CD14-positive monocyte (primary cell): ENCODE measurements at regions of chr10 and their contacts with region 1.

Region 1: DNA sequence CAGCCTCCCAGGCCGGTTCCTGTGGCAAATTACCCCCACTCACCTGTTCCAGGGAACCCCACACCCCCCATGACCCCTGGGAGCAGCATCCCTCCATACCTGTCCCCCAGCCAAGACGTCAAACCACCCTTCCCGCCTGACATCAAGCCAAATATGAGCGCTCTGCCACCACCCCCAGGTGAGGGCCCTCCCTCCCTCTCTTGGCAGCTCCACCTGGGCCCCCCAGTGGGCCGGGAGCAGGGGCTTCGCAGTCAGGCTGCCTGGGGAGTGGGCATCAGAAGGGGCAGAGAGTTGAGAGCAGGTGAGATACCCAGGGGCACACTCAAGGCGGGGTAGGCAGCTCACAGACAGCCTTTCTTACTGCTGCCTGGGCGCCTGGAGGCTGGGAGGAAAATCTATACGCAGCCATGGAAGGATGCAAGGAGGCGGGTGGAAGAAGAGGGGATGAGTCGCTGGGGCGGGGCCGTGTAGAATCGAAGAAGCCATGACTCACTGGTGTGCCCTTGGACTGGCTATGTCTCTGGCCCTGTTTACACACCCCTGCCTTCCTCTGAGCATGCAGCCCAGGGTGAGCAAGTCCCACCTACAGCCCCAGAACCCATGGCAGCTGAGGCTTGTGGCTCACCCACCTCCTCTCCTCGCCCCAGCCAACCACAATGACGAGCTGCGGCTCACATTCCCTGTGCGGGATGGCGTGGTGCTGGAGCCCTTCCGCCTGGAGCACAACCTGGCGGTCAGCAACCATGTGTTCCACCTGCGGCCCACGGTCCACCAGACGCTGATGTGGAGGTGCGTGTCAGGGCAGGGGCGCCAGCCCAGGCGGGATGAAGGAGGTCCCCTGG is 48.6 kb upstream of the PPIF start:
- DNase-seq: peak; percentile 90 to 96 (median 94)
- H3K4me3 ChIP-seq: no peak overlapping the region
- H3K4me3 Mint-ChIP-seq: no peak overlapping the region
- H3K27ac ChIP-seq: peak overlapping the region; percentile 49 to 98
- H3K27ac Mint-ChIP-seq: peak overlapping the region; percentile 42 to 100 (median 90)
- H3K4me1 ChIP-seq: peaks cover 46 to 51% of the 10 kb centered on the region in 2 donors
- H3K4me1 Mint-ChIP-seq: peaks cover 48% of the 10 kb centered on the region
- H3K27me3 ChIP-seq: no peaks in the 10 kb centered on the region
- H3K27me3 Mint-ChIP-seq: peaks cover 0 to 2% (median 0%) of the 10 kb centered on the region in 3 donors
- CTCF ChIP-seq: no peak

Region 2: GRCh38 chr10:77456414-77456813 is 1842.2 kb before region 1 on chr10:
- intact Hi-C with region 1: no loop called
- DNase-seq: no peak
- H3K4me3 ChIP-seq: no peak overlapping the region
- H3K4me3 Mint-ChIP-seq: no peak overlapping the region
- H3K27ac ChIP-seq: no peak overlapping the region
- H3K27ac Mint-ChIP-seq: no peak overlapping the region
- H3K4me1 ChIP-seq: no peaks in the 10 kb centered on the region
- H3K4me1 Mint-ChIP-seq: no peaks in the 10 kb centered on the region
- H3K27me3 ChIP-seq: no peaks in the 10 kb centered on the region
- H3K27me3 Mint-ChIP-seq: peaks cover 2 to 11% (median 5%) of the 10 kb centered on the region in 3 donors
- CTCF ChIP-seq: no peak

Region 3: GRCh38 chr10:79316671-79317431 is 18.2 kb after region 1 on chr10:
- intact Hi-C with region 1: loop called (anchors 1 to 2 kb)
- DNase-seq: peak in 2 of 3 donors; percentile 44 to 54
- H3K4me3 ChIP-seq: no peak overlapping the region
- H3K4me3 Mint-ChIP-seq: peak overlapping the region; percentile 6 to 60
- H3K27ac ChIP-seq: no peak overlapping the region
- H3K27ac Mint-ChIP-seq: peak overlapping the region in 6 of 7 donors; percentile 82 to 99 (median 98)
- H3K4me1 ChIP-seq: peaks cover 54 to 57% of the 10 kb centered on the region in 2 donors
- H3K4me1 Mint-ChIP-seq: peaks cover 55% of the 10 kb centered on the region
- H3K27me3 ChIP-seq: peaks cover 0 to 5% of the 10 kb centered on the region in 2 donors
- H3K27me3 Mint-ChIP-seq: peaks cover 7 to 26% (median 19%) of the 10 kb centered on the region in 3 donors
- CTCF ChIP-seq: no peak

Region 4: DNA sequence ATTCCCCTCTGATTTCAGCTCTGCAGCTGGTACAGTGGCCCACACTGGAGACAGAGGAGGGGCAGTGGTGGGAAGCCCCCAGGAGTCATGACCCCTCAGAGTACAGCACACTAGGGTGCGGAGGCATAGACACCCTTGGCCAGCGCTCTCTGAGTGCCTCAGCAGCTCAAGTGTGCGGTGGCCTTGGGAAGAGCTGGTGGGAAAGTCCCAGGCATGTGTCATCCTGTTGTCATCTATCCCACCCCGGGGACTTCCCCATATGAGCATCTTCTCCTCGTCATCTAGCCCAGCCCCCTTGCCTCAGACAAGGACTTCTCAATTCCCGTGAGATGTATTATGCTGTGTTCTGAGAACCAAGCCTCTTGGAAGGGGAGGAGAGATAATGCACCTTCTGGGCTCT is 33.1 kb after region 1 on chr10:
- intact Hi-C with region 1: loop called in 1 of 2 experiments (anchors 5 kb)
- DNase-seq: peak; percentile 98 to 100 (median 99)
- H3K4me3 ChIP-seq: no peak overlapping the region
- H3K4me3 Mint-ChIP-seq: peak overlapping the region; percentile 25 to 53
- H3K27ac ChIP-seq: peak overlapping the region; percentile 89 to 92
- H3K27ac Mint-ChIP-seq: peak overlapping the region; percentile 94 to 98 (median 98)
- H3K4me1 ChIP-seq: peaks cover 22 to 24% of the 10 kb centered on the region in 2 donors
- H3K4me1 Mint-ChIP-seq: peaks cover 27% of the 10 kb centered on the region
- H3K27me3 ChIP-seq: no peaks in the 10 kb centered on the region
- H3K27me3 Mint-ChIP-seq: peaks cover 5 to 9% (median 6%) of the 10 kb centered on the region in 3 donors
- CTCF ChIP-seq: no peak